ENCODE measurements at regions of chr7 and their contacts with region 1.

Region 1: DNA sequence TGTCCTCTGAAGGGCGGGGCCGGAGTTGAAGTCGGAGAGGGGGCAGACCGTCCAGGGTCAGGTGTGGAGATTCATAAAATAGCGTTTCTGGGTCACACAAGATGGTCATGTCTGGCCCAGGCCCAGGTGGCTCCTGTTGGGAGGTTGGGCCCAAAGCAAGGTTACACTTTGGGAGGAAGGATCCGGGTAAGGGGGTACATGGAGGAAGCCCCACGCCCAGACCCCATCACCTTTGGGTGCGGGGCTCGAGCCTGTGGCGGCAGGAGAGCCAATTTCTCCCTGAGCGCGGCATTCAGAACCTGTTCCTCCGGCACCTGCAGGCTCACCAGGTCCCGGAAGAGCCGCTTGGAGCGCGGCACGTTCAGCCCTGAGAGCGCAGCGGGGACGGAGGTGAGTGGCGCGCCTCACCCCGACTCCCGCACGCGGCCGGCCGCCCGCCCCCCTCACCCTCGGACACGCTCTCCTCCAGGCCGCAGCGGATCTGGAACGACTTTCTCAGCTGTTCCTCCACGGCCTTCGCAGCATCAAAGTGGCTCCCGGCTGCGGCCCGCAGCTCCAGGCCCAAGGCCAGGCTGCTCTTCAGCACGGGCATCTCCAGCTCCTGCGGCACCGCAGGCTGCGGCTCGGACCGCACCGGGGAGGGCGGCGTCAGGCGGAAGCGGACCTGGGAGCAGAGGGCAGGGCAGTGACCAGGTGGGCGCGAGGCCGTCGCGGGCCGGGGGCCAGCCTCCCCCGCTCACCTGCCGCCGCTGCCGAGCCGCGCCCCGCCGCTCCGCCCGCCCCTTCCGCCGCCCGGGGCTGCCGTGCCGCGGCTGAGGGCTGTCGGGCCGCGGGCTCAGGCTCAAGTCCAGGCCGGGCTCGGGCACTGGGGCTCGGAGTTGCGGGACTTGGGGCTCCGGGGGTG is 644 bp downstream of the PPP1R35 start:
- DNase-seq: peak; percentile 81
- H3K4me3 ChIP-seq: peak overlapping the region; percentile 79 to 93
- H3K27ac ChIP-seq: peak overlapping the region; percentile 79 to 92
- H3K4me1 ChIP-seq: peaks cover 22 to 46% of the 10 kb centered on the region in 2 experiments; a peak in 3 of 4 replicates
- H3K27me3 ChIP-seq: no peaks in the 10 kb centered on the region
- CTCF ChIP-seq: no peak
- EP300 ChIP-seq: no peak
- RAD21 ChIP-seq: no peak

Region 2: GRCh38 chr7:100446040-100446439 is 10.4 kb after region 1 on chr7:
- CTCF ChIA-PET with region 1: interaction called, 30 read pairs
- POLR2A ChIA-PET with region 1: interaction called, 7 read pairs
- DNase-seq: no peak
- H3K4me3 ChIP-seq: no peak overlapping the region
- H3K27ac ChIP-seq: peak overlapping the region in 1 of 2 experiments; percentile 36; a peak in 2 of 4 replicates
- H3K4me1 ChIP-seq: peaks cover 2 to 4% of the 10 kb centered on the region in 2 experiments; a peak in 2 of 4 replicates
- H3K27me3 ChIP-seq: no peaks in the 10 kb centered on the region
- CTCF ChIP-seq: no peak
- EP300 ChIP-seq: no peak
- RAD21 ChIP-seq: no peak